ENCODE measurements at regions of chr15 and their contacts with region 1.

Region 1: DNA sequence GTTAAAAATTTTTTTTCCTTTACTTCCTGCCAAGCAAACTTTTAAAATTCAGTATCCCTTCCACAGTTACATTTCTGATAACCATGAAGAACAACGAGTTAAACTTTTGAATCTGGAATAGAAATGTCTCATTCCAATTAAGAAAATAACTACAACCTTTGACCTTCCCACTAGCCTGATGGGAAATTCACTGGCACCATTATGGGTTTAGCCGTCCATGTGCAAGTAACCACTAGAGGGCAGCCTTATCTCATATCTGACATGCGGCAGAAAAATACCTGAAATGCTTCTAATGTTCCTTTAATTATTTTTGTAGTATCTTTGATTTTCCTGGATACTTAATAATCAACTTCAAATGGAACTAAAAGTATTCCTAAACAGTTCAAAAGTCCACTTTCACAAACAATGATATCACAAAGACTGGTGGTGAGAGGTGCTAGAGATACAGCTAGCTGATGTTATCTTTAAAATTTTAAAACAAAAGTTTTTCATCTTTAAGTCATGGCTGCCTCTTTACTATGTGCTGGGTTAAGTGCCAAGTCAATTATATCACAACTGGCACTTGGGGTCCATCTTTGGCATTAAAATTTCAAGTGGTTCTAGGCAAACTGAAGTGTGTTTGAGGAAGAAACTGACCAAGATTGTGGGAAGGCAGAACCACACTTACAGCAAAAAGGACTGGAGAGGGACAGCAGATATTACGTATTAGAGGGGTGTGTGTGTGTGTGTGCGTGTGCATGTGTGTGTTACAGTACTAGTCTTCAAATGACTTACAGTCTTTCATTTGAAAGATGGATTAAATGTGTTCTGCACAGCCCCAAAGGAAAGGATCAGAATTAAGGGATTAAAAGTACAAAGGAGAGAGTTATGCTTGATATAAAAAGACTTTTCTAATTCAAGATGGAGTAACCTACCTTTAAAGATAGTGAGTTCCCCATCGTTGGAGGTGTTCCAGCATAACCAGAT is 107.1 kb upstream of the ICE2 start:
- H3K4me3 Mint-ChIP-seq: no peak overlapping the region
- H3K27ac Mint-ChIP-seq: no peak overlapping the region
- H3K4me1 Mint-ChIP-seq: no peaks in the 10 kb centered on the region
- H3K27me3 Mint-ChIP-seq: peaks cover 39% of the 10 kb centered on the region

Region 2: DNA sequence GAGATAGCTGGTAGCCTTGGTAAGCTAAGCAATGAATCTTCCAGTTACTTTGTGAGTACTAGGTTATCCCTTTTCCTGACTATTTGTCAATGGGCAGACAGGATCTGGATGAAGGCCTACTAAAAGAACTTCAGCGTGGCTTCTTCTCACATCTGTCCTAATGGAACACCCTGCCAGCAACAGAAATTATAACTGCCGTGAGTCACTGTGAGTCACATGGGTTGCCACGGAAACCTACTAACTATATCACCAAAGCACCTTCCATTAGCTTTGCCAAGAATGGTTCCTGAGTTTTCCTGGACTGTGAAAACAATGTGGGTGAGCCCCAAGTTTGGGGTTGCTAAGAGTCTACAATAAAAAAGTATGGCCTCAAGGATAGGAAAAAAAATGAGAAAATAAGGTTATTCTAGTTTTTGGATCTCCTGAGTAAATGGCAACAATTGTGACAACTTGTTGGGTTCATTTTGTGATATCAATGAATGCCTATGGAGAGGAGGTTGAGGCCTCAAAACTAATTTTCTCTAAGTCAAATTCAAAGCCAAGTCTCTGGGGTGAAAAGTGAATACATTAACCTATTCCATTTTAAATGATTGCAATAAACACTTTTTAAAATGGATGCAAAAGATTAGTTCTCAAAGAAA is 88.0 kb after region 1 on chr15:
- intact Hi-C with region 1: no loop called
- H3K4me3 Mint-ChIP-seq: no peak overlapping the region
- H3K27ac Mint-ChIP-seq: no peak overlapping the region
- H3K4me1 Mint-ChIP-seq: no peaks in the 10 kb centered on the region
- H3K27me3 Mint-ChIP-seq: peaks cover 8% of the 10 kb centered on the region

Region 3: GRCh38 chr15:60916679-60917460 is 330.8 kb after region 1 on chr15:
- intact Hi-C with region 1: loop called (anchors 1 kb)
- H3K4me3 Mint-ChIP-seq: no peak overlapping the region
- H3K27ac Mint-ChIP-seq: peak overlapping the region; percentile 78
- H3K4me1 Mint-ChIP-seq: peaks cover 18% of the 10 kb centered on the region
- H3K27me3 Mint-ChIP-seq: peaks cover 8% of the 10 kb centered on the region

Measured in dendritic cell treated with granulocyte-macrophage colony-stimulating factor and Interleukin-4, amounts not matched to agents 40 ng/mL and 50 ng/mL, for 4 days (primary cell).